Colonic mucosa (tissue), 4 donors: ENCODE measurements at regions of chr15 and their contacts with region 1.

Region 1: GRCh38 chr15:88834211-88834812 is 31.1 kb downstream of the ACAN start:
- DNase-seq: peak; percentile 22
- H3K4me3 ChIP-seq: no peak overlapping the region
- H3K27ac ChIP-seq: no peak overlapping the region
- H3K4me1 ChIP-seq: no peaks in the 10 kb centered on the region
- H3K27me3 ChIP-seq: no peaks in the 10 kb centered on the region
- CTCF ChIP-seq: peak; percentile 20

Region 2: GRCh38 chr15:88476635-88477060 is 357.7 kb before region 1 on chr15:
- intact Hi-C with region 1: loop called (anchors 10 kb)
- DNase-seq: peak; percentile 23
- H3K4me3 ChIP-seq: no peak overlapping the region
- H3K27ac ChIP-seq: no peak overlapping the region
- H3K4me1 ChIP-seq: no peaks in the 10 kb centered on the region
- H3K27me3 ChIP-seq: no peaks in the 10 kb centered on the region
- CTCF ChIP-seq: peak; percentile 33

Region 3: GRCh38 chr15:88620995-88621772 is 213.1 kb before region 1 on chr15 and contains the start of gene AEN:
- intact Hi-C with region 1: loop called (anchors 10 kb)
- DNase-seq: peak; percentile 96
- H3K4me3 ChIP-seq: peak within 1 kb of the TSS; percentile 98
- H3K27ac ChIP-seq: peak within 1 kb of the TSS; percentile 70
- H3K4me1 ChIP-seq: peaks cover 15% of the 10 kb centered on the region
- H3K27me3 ChIP-seq: no peaks in the 10 kb centered on the region
- CTCF ChIP-seq: no peak
- total RNA-seq, gene AEN: 13.8 to 23.8 TPM

Region 4: GRCh38 chr15:88657326-88658069 is 176.8 kb before region 1 on chr15:
- intact Hi-C with region 1: loop called (anchors 5 kb)
- DNase-seq: no peak
- H3K4me3 ChIP-seq: no peak overlapping the region
- H3K27ac ChIP-seq: no peak overlapping the region
- H3K4me1 ChIP-seq: no peaks in the 10 kb centered on the region
- H3K27me3 ChIP-seq: no peaks in the 10 kb centered on the region
- CTCF ChIP-seq: peak; percentile 57